Cardiac septum (tissue), 1 donor: ENCODE measurements at regions of chr6 and their contacts with region 1.

Region 1: DNA sequence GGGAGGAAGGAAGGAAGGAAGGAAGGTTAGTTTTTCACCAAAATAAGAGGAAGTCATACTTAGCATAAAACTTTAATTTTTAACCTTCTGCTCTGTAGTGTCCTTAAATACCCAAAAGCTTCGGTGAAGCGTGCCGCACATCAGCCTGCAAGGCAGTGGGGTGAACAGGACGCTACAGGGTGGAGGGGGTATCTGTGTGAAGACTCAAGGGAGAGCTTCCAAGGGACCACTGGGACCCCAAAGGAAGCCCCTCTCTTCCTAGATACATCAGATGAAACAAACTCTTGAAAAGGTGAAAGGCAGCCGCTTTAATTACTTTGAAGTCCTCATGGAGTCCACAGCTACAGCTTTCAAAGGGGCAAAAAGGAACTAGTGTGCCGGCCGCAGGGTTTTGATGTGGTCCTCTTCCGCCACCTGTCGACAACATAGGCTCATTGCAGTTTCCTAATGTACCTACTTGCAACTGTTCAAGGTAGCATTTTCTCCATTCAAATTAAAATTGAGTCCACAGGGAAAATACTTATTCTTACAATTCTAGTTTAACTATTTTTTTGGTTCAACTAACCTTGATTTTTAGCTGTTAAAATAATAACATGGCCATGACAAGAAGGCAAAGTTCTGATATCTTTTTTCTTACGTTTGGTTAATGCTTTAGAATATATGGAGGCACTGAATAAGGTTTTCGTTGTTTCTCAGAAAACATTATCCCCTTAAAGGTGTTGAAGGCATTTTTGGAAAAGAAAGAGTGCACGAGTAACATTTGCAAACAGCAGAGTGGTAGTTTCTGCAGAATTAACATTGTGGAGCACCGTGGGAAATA is 135.0 kb upstream of the RIPOR2 start:
- DNase-seq: peak; percentile 88

Region 2: GRCh38 chr6:24581084-24581669 is 489.6 kb before region 1 on chr6:
- intact Hi-C with region 1: loop called (anchors 10 kb)
- DNase-seq: no peak

Region 3: DNA sequence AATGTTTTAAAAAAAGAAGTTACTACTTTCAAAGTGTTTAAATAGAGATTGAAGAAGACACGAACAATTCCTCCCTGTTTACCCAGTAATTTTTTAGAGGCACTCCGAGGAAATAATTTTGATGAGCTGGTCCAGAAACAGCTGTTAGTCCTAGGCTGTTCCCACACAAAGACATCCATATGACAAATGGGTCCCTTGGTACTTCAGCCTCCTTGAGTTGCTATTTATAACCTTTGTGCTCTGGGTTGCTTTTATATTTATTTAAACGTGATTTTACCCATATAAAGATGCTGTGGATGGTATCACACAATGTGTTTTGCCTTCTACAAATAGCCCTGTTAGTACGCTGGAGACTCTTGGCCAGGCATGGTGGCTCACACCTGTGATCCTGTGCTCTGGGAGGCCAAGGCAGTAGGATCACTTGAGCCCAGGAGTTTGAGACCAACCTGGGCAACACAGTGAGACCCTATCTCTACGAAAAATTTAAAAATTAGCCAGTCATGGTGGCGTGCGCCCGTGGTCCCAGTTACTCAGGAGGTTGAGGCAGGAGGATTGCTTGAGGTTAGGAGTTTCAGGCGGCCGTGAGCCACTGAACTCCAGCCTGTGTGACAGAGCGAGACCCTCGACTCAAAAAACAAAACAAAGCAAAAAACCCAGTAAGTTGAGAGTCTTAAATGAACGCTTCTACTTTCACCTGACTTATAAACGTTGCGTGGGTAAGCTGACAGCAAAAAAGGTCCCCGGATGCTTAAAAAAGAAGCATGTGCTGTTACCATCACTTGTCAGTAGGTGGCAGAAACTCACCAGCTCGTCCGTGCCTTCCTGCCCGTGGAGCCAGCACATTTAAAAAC is 215.1 kb before region 1 on chr6:
- intact Hi-C with region 1: loop called (anchors 2 kb)
- DNase-seq: peak; percentile 81

Region 4: GRCh38 chr6:24991810-24992467 is 78.8 kb before region 1 on chr6:
- intact Hi-C with region 1: loop called (anchors 5 kb)
- DNase-seq: no peak